ENCODE measurements at regions of chr19 and their contacts with region 1.

Region 1: GRCh38 chr19:48588670-48589399 is 17.7 kb upstream of the SPACA4 start:
- DNase-seq: peak; percentile 81
- H3K4me3 Mint-ChIP-seq: peak overlapping the region; percentile 63
- H3K27ac Mint-ChIP-seq: peak overlapping the region; percentile 60
- H3K4me1 Mint-ChIP-seq: peaks cover 16% of the 10 kb centered on the region
- H3K27me3 Mint-ChIP-seq: no peaks in the 10 kb centered on the region

Region 2: GRCh38 chr19:47255879-47256687 is 1332.8 kb before region 1 on chr19 and contains the start of gene CCDC9:
- intact Hi-C with region 1: no loop called
- DNase-seq: peak; percentile 93
- H3K4me3 Mint-ChIP-seq: peak within 1 kb of the TSS; percentile 86
- H3K27ac Mint-ChIP-seq: peak within 1 kb of the TSS; percentile 95
- H3K4me1 Mint-ChIP-seq: peaks cover 31% of the 10 kb centered on the region
- H3K27me3 Mint-ChIP-seq: peaks cover 2% of the 10 kb centered on the region
- total RNA-seq, gene CCDC9: 36.6 and 39.2 TPM in 2 replicates

Region 3: GRCh38 chr19:48271531-48272151 is 317.2 kb before region 1 on chr19:
- intact Hi-C with region 1: loop called (anchors 1 kb)
- DNase-seq: no peak
- H3K4me3 Mint-ChIP-seq: peak overlapping the region; percentile 81
- H3K27ac Mint-ChIP-seq: peak overlapping the region; percentile 23
- H3K4me1 Mint-ChIP-seq: peaks cover 13% of the 10 kb centered on the region
- H3K27me3 Mint-ChIP-seq: peaks cover 21% of the 10 kb centered on the region

Region 4: GRCh38 chr19:48308631-48309586 is 279.9 kb before region 1 on chr19:
- intact Hi-C with region 1: loop called (anchors 1 kb)
- DNase-seq: no peak
- H3K4me3 Mint-ChIP-seq: no peak overlapping the region
- H3K27ac Mint-ChIP-seq: no peak overlapping the region
- H3K4me1 Mint-ChIP-seq: no peaks in the 10 kb centered on the region
- H3K27me3 Mint-ChIP-seq: peaks cover 6% of the 10 kb centered on the region

Region 5: GRCh38 chr19:48391107-48391986 is 197.5 kb before region 1 on chr19 and contains the start of gene KDELR1:
- intact Hi-C with region 1: loop called (anchors 2 kb)
- DNase-seq: peak; percentile 69
- H3K4me3 Mint-ChIP-seq: peak within 1 kb of the TSS; percentile 98
- H3K27ac Mint-ChIP-seq: peak within 1 kb of the TSS; percentile 98
- H3K4me1 Mint-ChIP-seq: peaks cover 13% of the 10 kb centered on the region
- H3K27me3 Mint-ChIP-seq: peaks cover 36% of the 10 kb centered on the region
- total RNA-seq, gene KDELR1: 70.9 and 74.2 TPM in 2 replicates

Region 6: GRCh38 chr19:48501496-48502350 is 87.1 kb before region 1 on chr19:
- intact Hi-C with region 1: loop called (anchors 1 kb)
- DNase-seq: peak; percentile 63
- H3K4me3 Mint-ChIP-seq: peak overlapping the region; percentile 54
- H3K27ac Mint-ChIP-seq: peak overlapping the region; percentile 62
- H3K4me1 Mint-ChIP-seq: peaks cover 6% of the 10 kb centered on the region
- H3K27me3 Mint-ChIP-seq: peaks cover 5% of the 10 kb centered on the region

Region 7: GRCh38 chr19:48618916-48619691 is 30.3 kb after region 1 on chr19 and contains the starts of genes RPL18 and SPHK2:
- intact Hi-C with region 1: loop called (anchors 1 kb)
- DNase-seq: peak; percentile 94
- H3K4me3 Mint-ChIP-seq: peak within 1 kb of the TSS; percentile 99
- H3K27ac Mint-ChIP-seq: peak within 1 kb of the TSS; percentile 100
- H3K4me1 Mint-ChIP-seq: peaks cover 50% of the 10 kb centered on the region
- H3K27me3 Mint-ChIP-seq: no peaks in the 10 kb centered on the region
- total RNA-seq, gene RPL18: 1,774 and 1,780 TPM in 2 replicates
- total RNA-seq, gene SPHK2: 40.8 and 44.1 TPM in 2 replicates

Region 8: DNA sequence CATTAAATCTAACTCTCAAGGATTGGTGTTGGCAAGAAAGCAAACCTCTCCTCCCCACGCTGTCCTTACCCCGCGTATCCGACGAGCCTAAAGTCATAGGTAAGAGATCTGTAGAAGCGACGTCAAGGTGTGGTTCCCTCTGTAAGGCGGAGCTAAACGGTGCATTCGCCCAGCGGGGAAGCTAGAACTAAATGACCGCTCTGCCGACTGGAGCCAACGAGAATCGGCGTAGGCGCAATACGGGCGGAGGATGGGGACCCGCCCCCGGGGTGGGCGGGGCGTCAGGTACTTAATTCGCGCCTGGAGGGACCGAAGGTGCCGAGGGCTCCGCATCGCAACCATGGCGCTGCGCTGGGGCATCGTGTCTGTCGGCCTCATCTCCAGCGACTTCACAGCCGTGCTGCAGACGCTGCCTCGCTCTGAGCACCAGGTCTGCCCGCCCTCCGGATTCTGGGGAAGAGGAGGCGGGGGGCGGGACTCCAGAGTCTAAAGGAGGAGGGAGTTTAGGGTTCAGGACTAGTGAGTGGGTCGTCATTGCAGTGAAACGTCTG is 344.6 kb after region 1 on chr19 and contains the start of gene DHDH:
- intact Hi-C with region 1: no loop called
- DNase-seq: peak; percentile 85
- H3K4me3 Mint-ChIP-seq: peak within 1 kb of the TSS; percentile 83
- H3K27ac Mint-ChIP-seq: peak within 1 kb of the TSS; percentile 61
- H3K4me1 Mint-ChIP-seq: peaks cover 14% of the 10 kb centered on the region
- H3K27me3 Mint-ChIP-seq: peaks cover 11% of the 10 kb centered on the region
- total RNA-seq, gene DHDH: not detected in 2 replicates